Dendritic cell treated with granulocyte-macrophage colony-stimulating factor and Interleukin-4, amounts not matched to agents 40 ng/mL and 50 ng/mL, for 4 days (primary cell): ENCODE measurements at regions of chr4 and their contacts with region 1.

Region 1: GRCh38 chr4:152634110-152634760 is 45.6 kb downstream of the TMEM154 start:
- H3K4me3 Mint-ChIP-seq: no peak overlapping the region
- H3K27ac Mint-ChIP-seq: no peak overlapping the region
- H3K4me1 Mint-ChIP-seq: peaks cover 29% of the 10 kb centered on the region
- H3K27me3 Mint-ChIP-seq: no peaks in the 10 kb centered on the region

Region 2: GRCh38 chr4:152510349-152511147 is 123.7 kb before region 1 on chr4:
- intact Hi-C with region 1: no loop called
- H3K4me3 Mint-ChIP-seq: no peak overlapping the region
- H3K27ac Mint-ChIP-seq: no peak overlapping the region
- H3K4me1 Mint-ChIP-seq: peaks cover 17% of the 10 kb centered on the region
- H3K27me3 Mint-ChIP-seq: no peaks in the 10 kb centered on the region

Region 3: GRCh38 chr4:152572417-152573086 is 61.7 kb before region 1 on chr4:
- intact Hi-C with region 1: loop called (anchors 10 kb)
- H3K4me3 Mint-ChIP-seq: no peak overlapping the region
- H3K27ac Mint-ChIP-seq: no peak overlapping the region
- H3K4me1 Mint-ChIP-seq: peaks cover 19% of the 10 kb centered on the region
- H3K27me3 Mint-ChIP-seq: peaks cover 3% of the 10 kb centered on the region